PC-9 (cell line): ENCODE measurements at regions of chr10 and their contacts with region 1.

Region 1: GRCh38 chr10:72319416-72320254 is 35.1 kb downstream of the DNAJB12 start:
- DNase-seq: peak; percentile 91 to 95
- H3K4me3 ChIP-seq: peak overlapping the region; percentile 59
- H3K27ac ChIP-seq: peak overlapping the region; percentile 99
- H3K4me1 ChIP-seq: peaks cover 95% of the 10 kb centered on the region
- H3K27me3 ChIP-seq: no peaks in the 10 kb centered on the region
- CTCF ChIP-seq: no peak

Region 2: DNA sequence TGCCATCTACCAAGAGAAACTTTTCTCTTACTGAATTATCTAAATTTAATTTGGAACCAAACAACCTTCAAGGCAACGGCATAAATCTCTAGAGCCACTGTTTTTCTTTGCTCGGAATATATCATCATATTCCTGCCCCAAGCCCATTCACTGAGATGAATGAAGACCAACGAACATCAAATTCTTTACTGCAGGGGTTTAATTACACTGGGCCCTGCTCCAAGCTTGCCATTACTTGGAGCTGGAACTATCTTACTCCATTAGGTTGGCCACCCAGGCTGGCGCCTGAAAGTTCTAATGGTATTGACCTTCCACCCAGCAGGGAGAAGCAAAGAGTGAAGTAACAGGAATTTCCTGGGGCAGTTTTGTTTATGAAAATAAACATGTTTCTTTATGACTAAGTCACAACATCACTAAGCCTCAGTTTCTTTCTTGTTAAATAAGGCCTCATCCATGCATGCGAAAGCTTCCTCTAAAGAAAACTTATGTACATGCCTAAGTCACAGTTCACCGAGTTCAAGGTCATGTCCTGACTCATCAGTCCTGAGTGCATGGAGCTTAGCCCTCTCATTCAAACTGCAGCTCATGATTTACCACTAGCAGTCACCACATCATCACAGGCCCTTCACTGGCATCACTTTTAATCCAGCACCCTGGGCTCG is 145.9 kb before region 1 on chr10:
- CTCF ChIA-PET with region 1: no interaction called
- POLR2A ChIA-PET with region 1: interaction called, 13 read pairs
- intact Hi-C with region 1: no loop called
- DNase-seq: peak in 1 of 2 experiments; percentile 48
- H3K4me3 ChIP-seq: no peak overlapping the region
- H3K27ac ChIP-seq: peak overlapping the region; percentile 43
- H3K4me1 ChIP-seq: peaks cover 61% of the 10 kb centered on the region
- H3K27me3 ChIP-seq: no peaks in the 10 kb centered on the region
- CTCF ChIP-seq: no peak

Region 3: GRCh38 chr10:72242675-72243074 is 77.0 kb before region 1 on chr10:
- CTCF ChIA-PET with region 1: no interaction called
- POLR2A ChIA-PET with region 1: interaction called, 26 read pairs
- intact Hi-C with region 1: no loop called
- DNase-seq: no peak
- H3K4me3 ChIP-seq: no peak overlapping the region
- H3K27ac ChIP-seq: peak overlapping the region; percentile 82
- H3K4me1 ChIP-seq: peaks cover 50% of the 10 kb centered on the region
- H3K27me3 ChIP-seq: no peaks in the 10 kb centered on the region
- CTCF ChIP-seq: no peak

Region 4: DNA sequence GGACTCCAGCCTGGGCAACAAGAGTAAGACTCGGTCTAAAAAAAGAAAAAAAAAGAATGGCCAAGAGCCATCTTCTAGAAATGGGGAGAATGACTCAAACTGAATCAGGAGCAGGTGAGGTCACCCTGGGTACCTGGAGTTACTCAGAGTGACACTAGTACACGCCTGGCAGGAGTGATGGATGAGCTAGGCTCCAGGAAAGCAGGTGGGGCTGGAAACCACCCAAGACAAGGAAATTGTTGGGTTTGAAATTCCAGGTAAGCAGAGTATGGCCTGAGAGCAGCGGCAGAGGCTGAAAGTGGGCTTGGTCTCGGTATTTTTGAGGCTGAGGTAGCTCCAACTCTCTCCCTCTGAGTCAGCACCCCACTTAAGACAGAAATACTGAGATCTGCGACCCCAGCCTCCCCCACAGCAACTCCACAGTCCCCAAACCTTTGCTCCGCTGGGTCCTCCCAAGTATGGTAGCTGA is 27.4 kb before region 1 on chr10:
- CTCF ChIA-PET with region 1: interaction called, 7 read pairs
- POLR2A ChIA-PET with region 1: interaction called, 20 read pairs
- intact Hi-C with region 1: loop called (anchors 1 kb)
- DNase-seq: peak; percentile 91 to 99
- H3K4me3 ChIP-seq: peak overlapping the region; percentile 8; the same call in 1 of the 2 replicates
- H3K27ac ChIP-seq: peak overlapping the region; percentile 93
- H3K4me1 ChIP-seq: peaks cover 54% of the 10 kb centered on the region
- H3K27me3 ChIP-seq: no peaks in the 10 kb centered on the region
- CTCF ChIP-seq: no peak

Region 5: DNA sequence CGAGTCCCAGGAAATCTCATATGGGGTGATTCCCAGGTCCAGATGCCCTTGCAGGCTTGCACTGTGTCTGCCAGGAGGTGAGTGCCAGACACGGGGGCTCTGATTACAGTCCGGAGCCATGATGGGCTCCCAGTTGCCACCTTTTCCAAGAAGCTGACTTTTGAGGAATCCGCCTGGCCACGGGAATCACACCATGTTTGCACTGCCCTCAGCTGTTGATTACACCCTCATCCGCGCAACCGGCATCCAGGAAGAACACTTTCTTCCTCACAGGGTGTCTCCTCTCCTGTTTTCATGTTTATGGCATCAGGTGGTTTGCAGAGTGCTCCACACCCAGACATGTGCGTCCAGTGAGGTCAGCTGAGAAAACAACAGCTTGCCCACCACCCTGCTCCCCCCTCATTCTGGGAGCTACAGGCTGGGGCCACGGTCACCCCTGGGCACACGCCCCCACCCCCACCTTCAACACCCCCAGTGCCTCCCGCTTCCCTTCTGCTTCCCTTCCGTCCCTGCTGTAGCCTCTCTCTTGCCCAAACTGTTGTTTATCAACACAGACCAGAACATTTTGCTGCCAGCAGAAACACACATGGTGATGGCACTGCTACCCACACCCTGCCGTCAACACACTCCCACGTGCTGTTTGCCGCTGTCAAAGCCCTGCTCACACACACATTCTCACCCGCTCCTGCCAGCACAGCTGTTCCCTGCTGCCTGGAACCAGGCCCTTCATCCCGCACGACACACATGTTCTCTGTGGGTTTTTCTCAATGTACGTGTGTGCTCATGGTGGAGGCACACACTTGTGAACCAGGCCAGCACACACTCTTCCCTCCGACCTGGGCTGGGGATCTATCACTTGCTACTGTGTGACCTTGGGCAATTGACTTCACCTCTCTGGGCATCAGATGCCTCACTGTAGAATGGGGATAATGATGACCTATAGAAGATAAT is 10.1 kb before region 1 on chr10:
- CTCF ChIA-PET with region 1: interaction called, 9 read pairs
- POLR2A ChIA-PET with region 1: interaction called, 34 read pairs
- intact Hi-C with region 1: no loop called
- DNase-seq: no peak
- H3K4me3 ChIP-seq: 0 out of 2 replicates have a peak overlapping the region, but pooled peaks have one; percentile 7
- H3K27ac ChIP-seq: peak overlapping the region; percentile 93
- H3K4me1 ChIP-seq: peaks cover 67% of the 10 kb centered on the region
- H3K27me3 ChIP-seq: no peaks in the 10 kb centered on the region
- CTCF ChIP-seq: no peak

Region 6: GRCh38 chr10:73931767-73932619 is 1612.4 kb after region 1 on chr10:
- CTCF ChIA-PET with region 1: interaction called, 10 read pairs
- POLR2A ChIA-PET with region 1: no interaction called
- intact Hi-C with region 1: no loop called
- DNase-seq: peak; percentile 93 to 99
- H3K4me3 ChIP-seq: peak overlapping the region; percentile 27; the same call in 1 of the 2 replicates
- H3K27ac ChIP-seq: peak overlapping the region; percentile 97
- H3K4me1 ChIP-seq: peaks cover 43% of the 10 kb centered on the region
- H3K27me3 ChIP-seq: no peaks in the 10 kb centered on the region
- CTCF ChIP-seq: no peak